ENCODE measurements at regions of chr5 and their contacts with region 1.

Region 1: GRCh38 chr5:74581988-74582365 is 58.6 kb downstream of the ENC1 start:
- DNase-seq: no peak
- H3K4me3 ChIP-seq: no peak overlapping the region
- H3K4me3 Mint-ChIP-seq: peak overlapping the region; percentile 35
- H3K27ac Mint-ChIP-seq: peak overlapping the region; percentile 97
- H3K4me1 ChIP-seq: peaks cover 63% of the 10 kb centered on the region
- H3K4me1 Mint-ChIP-seq: peaks cover 39% of the 10 kb centered on the region
- H3K27me3 ChIP-seq: no peaks in the 10 kb centered on the region
- H3K27me3 Mint-ChIP-seq: no peaks in the 10 kb centered on the region
- CTCF ChIP-seq: no peak

Region 2: GRCh38 chr5:74394916-74395781 is 186.8 kb before region 1 on chr5:
- CTCF ChIA-PET with region 1: no interaction called
- POLR2A ChIA-PET with region 1: no interaction called
- intact Hi-C with region 1: no loop called
- DNase-seq: peak; percentile 81 to 91
- H3K4me3 ChIP-seq: no peak overlapping the region
- H3K4me3 Mint-ChIP-seq: no peak overlapping the region
- H3K27ac Mint-ChIP-seq: peak overlapping the region; percentile 83
- H3K4me1 ChIP-seq: peaks cover 47% of the 10 kb centered on the region
- H3K4me1 Mint-ChIP-seq: peaks cover 42% of the 10 kb centered on the region
- H3K27me3 ChIP-seq: no peaks in the 10 kb centered on the region
- H3K27me3 Mint-ChIP-seq: no peaks in the 10 kb centered on the region
- CTCF ChIP-seq: peak; percentile 36 to 51

Region 3: DNA sequence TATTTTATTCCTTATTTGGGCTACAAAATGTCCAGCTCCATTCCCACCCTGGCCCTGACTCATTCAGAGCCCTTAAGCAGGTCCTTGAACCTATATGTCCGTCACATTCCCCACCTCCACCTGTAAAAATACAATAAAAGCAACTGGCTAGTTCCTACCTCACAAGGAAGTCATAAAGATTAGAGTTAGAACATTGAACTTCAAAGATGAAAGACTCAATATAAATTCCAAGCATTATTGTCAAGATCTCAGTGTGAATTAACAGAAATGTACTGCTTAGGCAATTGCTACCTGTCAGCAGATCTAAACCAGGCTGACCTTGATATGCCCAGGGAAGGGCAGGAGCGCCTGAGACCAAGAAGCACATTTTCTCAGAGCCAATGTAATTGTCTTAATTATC is 163.3 kb before region 1 on chr5:
- CTCF ChIA-PET with region 1: no interaction called
- POLR2A ChIA-PET with region 1: no interaction called
- intact Hi-C with region 1: loop called (anchors 2 kb)
- DNase-seq: peak; percentile 55 to 61
- H3K4me3 ChIP-seq: no peak overlapping the region
- H3K4me3 Mint-ChIP-seq: no peak overlapping the region
- H3K27ac Mint-ChIP-seq: no peak overlapping the region
- H3K4me1 ChIP-seq: peaks cover 42% of the 10 kb centered on the region
- H3K4me1 Mint-ChIP-seq: peaks cover 63% of the 10 kb centered on the region
- H3K27me3 ChIP-seq: no peaks in the 10 kb centered on the region
- H3K27me3 Mint-ChIP-seq: no peaks in the 10 kb centered on the region
- CTCF ChIP-seq: no peak

Region 4: DNA sequence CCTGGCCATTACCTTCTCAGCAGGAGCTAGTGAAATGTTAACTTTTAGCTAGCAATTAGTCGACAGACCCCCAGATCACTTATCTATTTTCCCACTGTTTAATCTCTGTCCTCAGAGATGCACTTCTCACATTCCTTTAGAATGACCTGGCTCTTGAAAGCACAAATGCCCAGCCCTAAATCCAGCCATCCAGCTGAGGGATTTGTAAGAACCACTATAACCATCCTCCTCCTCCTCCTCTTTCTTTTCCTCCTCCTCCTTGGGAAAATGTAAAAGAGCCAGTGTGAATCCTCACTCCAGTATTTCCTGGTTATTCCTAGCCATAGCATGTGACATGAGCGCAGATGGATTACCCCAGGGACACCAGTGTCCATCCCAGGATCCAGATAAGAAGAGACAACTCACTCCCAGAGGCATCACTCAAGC is 65.8 kb before region 1 on chr5:
- CTCF ChIA-PET with region 1: no interaction called
- POLR2A ChIA-PET with region 1: no interaction called
- intact Hi-C with region 1: loop called (anchors 5 kb)
- DNase-seq: peak in 1 of 2 experiments; percentile 54
- H3K4me3 ChIP-seq: no peak overlapping the region
- H3K4me3 Mint-ChIP-seq: peak overlapping the region; percentile 20
- H3K27ac Mint-ChIP-seq: peak overlapping the region; percentile 72
- H3K4me1 ChIP-seq: peaks cover 35% of the 10 kb centered on the region
- H3K4me1 Mint-ChIP-seq: peaks cover 30% of the 10 kb centered on the region
- H3K27me3 ChIP-seq: no peaks in the 10 kb centered on the region
- H3K27me3 Mint-ChIP-seq: no peaks in the 10 kb centered on the region
- CTCF ChIP-seq: no peak

Region 5: DNA sequence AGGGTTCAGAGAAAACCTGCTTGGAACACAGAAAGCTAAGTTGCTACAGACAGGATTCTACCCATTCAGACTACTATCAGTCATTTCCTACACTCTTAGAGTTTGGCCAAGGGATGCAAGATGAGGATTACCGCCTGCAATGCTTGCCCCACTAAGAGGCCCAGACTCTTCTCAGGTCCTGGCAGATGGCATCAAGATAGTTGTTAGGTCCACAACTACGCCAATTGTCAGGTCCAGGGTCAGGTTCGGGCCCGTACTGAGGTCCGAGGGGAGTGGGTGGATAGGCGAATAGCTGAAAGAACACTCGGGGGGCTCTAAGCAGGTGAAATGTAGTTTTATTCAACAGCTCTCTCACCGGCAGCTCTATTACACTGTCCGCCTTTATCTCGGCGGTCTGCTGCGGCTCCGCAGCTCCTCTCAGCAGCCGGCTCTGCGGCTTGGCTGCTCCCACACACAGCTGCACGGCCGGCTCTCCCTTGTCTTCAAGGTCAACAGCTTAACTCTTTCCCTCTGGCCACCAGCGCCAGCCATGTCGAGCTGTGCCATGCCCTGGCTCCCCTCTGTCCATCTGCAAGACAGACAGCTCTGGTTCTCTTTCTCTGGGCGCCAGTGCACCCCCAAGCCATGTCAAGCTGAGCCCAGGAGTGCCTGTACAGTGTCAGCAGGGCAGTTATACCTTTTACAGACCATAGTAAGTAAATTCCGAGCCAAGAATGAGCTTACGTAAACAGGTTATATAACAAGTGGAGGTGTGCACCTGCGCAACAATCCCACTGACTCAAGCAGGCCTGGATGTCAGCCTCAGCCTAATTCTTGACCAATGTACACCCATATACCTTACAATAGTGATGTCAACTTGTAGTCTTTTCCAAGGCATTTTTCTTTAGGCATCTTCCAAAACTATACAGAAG is 34.5 kb after region 1 on chr5:
- CTCF ChIA-PET with region 1: no interaction called
- POLR2A ChIA-PET with region 1: no interaction called
- intact Hi-C with region 1: loop called (anchors 1 kb)
- DNase-seq: peak in 1 of 2 experiments; percentile 23
- H3K4me3 ChIP-seq: no peak overlapping the region
- H3K4me3 Mint-ChIP-seq: no peak overlapping the region
- H3K27ac Mint-ChIP-seq: peak overlapping the region; percentile 71
- H3K4me1 ChIP-seq: peaks cover 40% of the 10 kb centered on the region
- H3K4me1 Mint-ChIP-seq: peaks cover 39% of the 10 kb centered on the region
- H3K27me3 ChIP-seq: no peaks in the 10 kb centered on the region
- H3K27me3 Mint-ChIP-seq: no peaks in the 10 kb centered on the region
- CTCF ChIP-seq: no peak

Measured in Caco-2 (cell line).